ENCODE measurements at regions of chr9 and their contacts with region 1.

Region 1: GRCh38 chr9:21334701-21335632 is at the start of gene KLHL9:
- DNase-seq: peak; percentile 75
- H3K4me3 Mint-ChIP-seq: peak within 1 kb of the TSS; percentile 92
- H3K27ac Mint-ChIP-seq: peak within 1 kb of the TSS; percentile 85
- H3K4me1 Mint-ChIP-seq: peaks cover 32% of the 10 kb centered on the region
- H3K27me3 Mint-ChIP-seq: peaks cover 13% of the 10 kb centered on the region
- total RNA-seq, gene KLHL9: 14.1 and 15.6 TPM in 2 replicates

Region 2: GRCh38 chr9:21305213-21305612 is 29.8 kb before region 1 on chr9 and contains the start of gene IFNA5:
- intact Hi-C with region 1: no loop called
- DNase-seq: no peak
- H3K4me3 Mint-ChIP-seq: no peak within 1 kb of the TSS
- H3K27ac Mint-ChIP-seq: no peak within 1 kb of the TSS
- H3K4me1 Mint-ChIP-seq: no peaks in the 10 kb centered on the region
- H3K27me3 Mint-ChIP-seq: peaks cover 23% of the 10 kb centered on the region
- total RNA-seq, gene IFNA5: not detected in 2 replicates

Region 3: GRCh38 chr9:21357479-21358460 is 22.8 kb after region 1 on chr9:
- intact Hi-C with region 1: loop called (anchors 1 kb)
- DNase-seq: no peak
- H3K4me3 Mint-ChIP-seq: peak overlapping the region; percentile 56
- H3K27ac Mint-ChIP-seq: peak overlapping the region; percentile 68
- H3K4me1 Mint-ChIP-seq: peaks cover 14% of the 10 kb centered on the region
- H3K27me3 Mint-ChIP-seq: peaks cover 57% of the 10 kb centered on the region

Region 4: DNA sequence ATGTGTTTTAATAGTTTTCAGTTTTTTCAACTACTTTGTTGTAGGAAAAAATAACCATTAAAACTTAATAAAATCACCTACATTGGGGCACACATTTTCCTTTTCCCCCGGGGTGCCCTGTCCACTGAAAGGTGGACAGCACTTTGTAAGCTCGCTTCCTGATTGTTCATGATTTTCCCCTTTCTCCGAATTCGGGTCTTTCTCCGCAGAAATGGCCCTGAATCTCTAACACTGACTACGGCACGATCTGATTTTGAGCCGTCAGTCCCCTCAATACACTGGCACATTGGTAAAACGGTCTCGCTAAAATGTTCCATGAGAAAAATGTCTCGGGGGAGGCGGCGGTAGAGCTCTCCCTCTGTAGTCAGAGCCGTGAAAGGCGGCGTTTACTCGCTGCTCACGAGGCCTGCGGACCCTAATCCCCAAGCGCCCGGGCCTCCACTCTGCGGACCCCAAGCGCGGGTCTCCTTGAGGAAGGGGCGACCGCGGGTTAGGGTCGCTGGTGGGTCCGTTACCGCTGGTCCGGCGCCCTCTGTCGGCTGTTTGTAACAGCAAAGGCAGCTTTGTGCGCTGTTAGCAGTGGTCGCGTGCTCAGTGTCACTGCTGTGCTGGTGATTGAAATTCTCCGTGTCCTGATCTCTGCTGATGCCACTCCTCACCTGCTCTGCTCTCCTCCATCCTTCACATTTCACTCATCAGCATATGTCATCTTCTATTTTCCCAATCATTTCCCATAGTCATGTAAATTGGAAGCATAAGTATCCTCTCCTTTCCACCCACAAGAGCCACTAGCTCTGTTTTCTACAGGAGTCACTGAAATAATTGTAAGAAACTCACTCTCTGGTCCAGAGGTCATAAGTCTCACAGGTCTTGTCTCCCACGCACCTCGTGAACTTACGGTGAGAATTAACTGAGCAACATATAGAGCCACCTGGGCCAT is 61.1 kb after region 1 on chr9:
- intact Hi-C with region 1: loop called (anchors 2 kb)
- DNase-seq: peak; percentile 28
- H3K4me3 Mint-ChIP-seq: peak overlapping the region; percentile 78
- H3K27ac Mint-ChIP-seq: no peak overlapping the region
- H3K4me1 Mint-ChIP-seq: peaks cover 10% of the 10 kb centered on the region
- H3K27me3 Mint-ChIP-seq: peaks cover 64% of the 10 kb centered on the region

Region 5: GRCh38 chr9:21802195-21803000 is 467.4 kb after region 1 on chr9 and contains the start of gene MTAP:
- intact Hi-C with region 1: loop called (anchors 1 kb)
- DNase-seq: peak; percentile 61
- H3K4me3 Mint-ChIP-seq: peak within 1 kb of the TSS; percentile 100
- H3K27ac Mint-ChIP-seq: peak within 1 kb of the TSS; percentile 100
- H3K4me1 Mint-ChIP-seq: peaks cover 43% of the 10 kb centered on the region
- H3K27me3 Mint-ChIP-seq: peaks cover 48% of the 10 kb centered on the region
- total RNA-seq, gene MTAP: 55.5 and 62.2 TPM in 2 replicates

Region 6: DNA sequence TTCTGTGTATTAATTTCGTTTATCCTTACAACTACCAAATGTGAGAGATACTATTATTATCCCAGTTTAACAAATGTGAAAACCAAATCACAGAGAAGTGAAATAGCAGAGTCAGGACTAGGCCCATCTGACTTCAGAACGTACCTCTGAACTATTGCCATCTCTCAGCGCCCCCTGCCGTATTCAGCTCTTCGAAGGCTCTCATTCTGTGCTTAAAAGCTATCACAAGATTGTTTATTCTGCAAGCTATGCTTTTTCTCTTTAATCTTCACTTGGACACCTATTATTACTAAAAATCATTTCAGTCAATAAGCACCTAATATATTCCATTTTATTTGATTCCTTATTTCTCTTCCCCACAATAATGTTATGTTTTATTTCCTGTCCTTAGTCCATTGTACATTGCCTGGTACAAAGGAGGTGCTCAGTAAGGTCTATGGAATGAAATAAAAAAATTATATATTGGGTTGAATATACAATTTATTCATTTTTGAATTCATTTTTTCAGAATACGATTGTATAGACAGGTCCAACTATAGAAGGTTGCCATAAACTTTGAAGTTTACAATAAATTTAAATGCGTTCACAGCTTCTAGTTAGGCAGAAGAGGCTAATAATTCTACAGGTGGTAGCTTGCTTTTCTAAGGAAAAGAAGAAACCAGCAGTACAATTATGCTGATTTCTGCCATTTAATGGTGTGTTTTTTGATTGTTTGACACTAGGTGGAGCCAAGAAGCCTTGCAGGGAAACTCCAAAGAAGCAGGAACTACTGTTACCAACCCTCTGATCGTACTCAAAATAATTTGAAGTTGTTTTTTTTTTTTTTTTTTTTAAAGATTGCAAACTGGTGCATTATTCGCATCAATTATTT is 909.4 kb after region 1 on chr9:
- intact Hi-C with region 1: loop called (anchors 10 kb)
- DNase-seq: no peak
- H3K4me3 Mint-ChIP-seq: no peak overlapping the region
- H3K27ac Mint-ChIP-seq: no peak overlapping the region
- H3K4me1 Mint-ChIP-seq: peaks cover 28% of the 10 kb centered on the region
- H3K27me3 Mint-ChIP-seq: peaks cover 61% of the 10 kb centered on the region